Endothelial cell of umbilical vein (primary cell): ENCODE measurements at regions of chr4 and their contacts with region 1.

Region 1: GRCh38 chr4:183098723-183099536 is at the start of gene WWC2:
- DNase-seq: peak; percentile 94
- H3K4me3 ChIP-seq: peak within 1 kb of the TSS; percentile 80 to 90 (median 83)
- H3K27ac ChIP-seq: peak within 1 kb of the TSS; percentile 99
- H3K4me1 ChIP-seq: peaks cover 24% of the 10 kb centered on the region
- H3K27me3 ChIP-seq: no peaks in the 10 kb centered on the region
- CTCF ChIP-seq: no peak
- POLR2A ChIP-seq: peak; percentile 68
- total RNA-seq, gene WWC2: 51.8 and 52.2 TPM in 2 replicates

Region 2: GRCh38 chr4:183059797-183060196 is 39.1 kb before region 1 on chr4:
- CTCF ChIA-PET with region 1: no interaction called
- POLR2A ChIA-PET with region 1: no interaction called
- dilution Hi-C with region 1: no loop called
- intact Hi-C with region 1: no loop called
- DNase-seq: no peak
- H3K4me3 ChIP-seq: no peak overlapping the region
- H3K27ac ChIP-seq: no peak overlapping the region
- H3K4me1 ChIP-seq: no peaks in the 10 kb centered on the region
- H3K27me3 ChIP-seq: peaks cover 8 to 9% of the 10 kb centered on the region in 2 experiments
- CTCF ChIP-seq: no peak
- POLR2A ChIP-seq: no peak

Region 3: DNA sequence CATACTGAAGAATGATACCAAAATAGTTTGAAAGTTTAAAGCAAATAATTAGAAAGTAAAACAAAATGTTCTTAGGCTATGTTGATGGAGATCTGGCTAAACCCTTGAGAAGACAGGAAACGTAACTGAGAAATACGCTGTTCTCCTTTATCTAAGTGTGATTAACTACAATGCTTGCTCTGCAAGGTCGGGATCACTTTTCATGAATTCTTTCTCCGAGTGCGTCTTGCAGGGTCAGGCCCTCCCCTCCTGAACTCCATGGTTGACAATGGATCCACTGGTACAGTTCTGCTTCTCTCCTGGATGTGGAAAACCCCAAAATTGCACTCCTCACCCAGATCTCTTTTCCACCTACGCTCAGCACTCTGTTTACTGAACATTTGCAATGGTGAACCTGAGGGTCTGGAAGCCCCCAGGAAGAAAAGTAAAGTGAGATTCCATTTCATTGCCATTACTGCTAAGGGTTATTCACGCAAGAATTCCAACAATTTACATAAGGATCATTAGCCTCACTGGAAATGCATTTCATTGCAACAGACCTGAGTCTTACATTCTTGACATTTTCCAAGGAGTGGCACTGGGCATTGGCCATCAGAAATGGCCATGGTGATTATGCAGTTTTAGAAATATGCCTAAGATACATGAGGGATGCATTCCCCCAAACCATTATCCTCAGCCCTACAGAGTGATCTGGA is 24.5 kb before region 1 on chr4:
- CTCF ChIA-PET with region 1: interaction called, 32 read pairs
- POLR2A ChIA-PET with region 1: no interaction called
- dilution Hi-C with region 1: no loop called
- intact Hi-C with region 1: loop called (anchors 1 kb)
- DNase-seq: no peak
- H3K4me3 ChIP-seq: no peak overlapping the region
- H3K27ac ChIP-seq: no peak overlapping the region
- H3K4me1 ChIP-seq: peaks cover 4% of the 10 kb centered on the region
- H3K27me3 ChIP-seq: no peaks in the 10 kb centered on the region
- CTCF ChIP-seq: no peak
- POLR2A ChIP-seq: no peak

Region 4: GRCh38 chr4:183144787-183145186 is 45.9 kb after region 1 on chr4:
- CTCF ChIA-PET with region 1: interaction called, 6 read pairs
- POLR2A ChIA-PET with region 1: no interaction called
- dilution Hi-C with region 1: no loop called
- intact Hi-C with region 1: loop called (anchors 2 kb)
- DNase-seq: no peak
- H3K4me3 ChIP-seq: no peak overlapping the region
- H3K27ac ChIP-seq: no peak overlapping the region
- H3K4me1 ChIP-seq: peaks cover 10% of the 10 kb centered on the region
- H3K27me3 ChIP-seq: no peaks in the 10 kb centered on the region
- CTCF ChIP-seq: no peak
- POLR2A ChIP-seq: no peak

Region 5: GRCh38 chr4:183182873-183183725 is 84.2 kb after region 1 on chr4:
- CTCF ChIA-PET with region 1: interaction called, 6 read pairs
- POLR2A ChIA-PET with region 1: interaction called, 3 read pairs
- dilution Hi-C with region 1: no loop called
- intact Hi-C with region 1: loop called (anchors 1 kb)
- DNase-seq: peak; percentile 93
- H3K4me3 ChIP-seq: no peak overlapping the region
- H3K27ac ChIP-seq: peak overlapping the region; percentile 63
- H3K4me1 ChIP-seq: peaks cover 16% of the 10 kb centered on the region
- H3K27me3 ChIP-seq: no peaks in the 10 kb centered on the region
- CTCF ChIP-seq: no peak
- POLR2A ChIP-seq: no peak

Region 6: GRCh38 chr4:183249857-183250256 is 150.9 kb after region 1 on chr4:
- CTCF ChIA-PET with region 1: interaction called, 30 read pairs
- POLR2A ChIA-PET with region 1: no interaction called
- dilution Hi-C with region 1: loop called (anchors 10 kb)
- intact Hi-C with region 1: no loop called
- DNase-seq: peak; percentile 52
- H3K4me3 ChIP-seq: no peak overlapping the region
- H3K27ac ChIP-seq: no peak overlapping the region
- H3K4me1 ChIP-seq: no peaks in the 10 kb centered on the region
- H3K27me3 ChIP-seq: no peaks in the 10 kb centered on the region
- CTCF ChIP-seq: peak; percentile 11 to 33
- POLR2A ChIP-seq: no peak

Region 7: GRCh38 chr4:183261953-183262775 is 163.2 kb after region 1 on chr4:
- CTCF ChIA-PET with region 1: interaction called, 18 read pairs
- POLR2A ChIA-PET with region 1: no interaction called
- dilution Hi-C with region 1: loop called (anchors 10 kb)
- intact Hi-C with region 1: no loop called
- DNase-seq: peak; percentile 74
- H3K4me3 ChIP-seq: no peak overlapping the region
- H3K27ac ChIP-seq: peak overlapping the region; percentile 16
- H3K4me1 ChIP-seq: no peaks in the 10 kb centered on the region
- H3K27me3 ChIP-seq: no peaks in the 10 kb centered on the region
- CTCF ChIP-seq: peak; percentile 76 to 85
- POLR2A ChIP-seq: no peak

Region 8: DNA sequence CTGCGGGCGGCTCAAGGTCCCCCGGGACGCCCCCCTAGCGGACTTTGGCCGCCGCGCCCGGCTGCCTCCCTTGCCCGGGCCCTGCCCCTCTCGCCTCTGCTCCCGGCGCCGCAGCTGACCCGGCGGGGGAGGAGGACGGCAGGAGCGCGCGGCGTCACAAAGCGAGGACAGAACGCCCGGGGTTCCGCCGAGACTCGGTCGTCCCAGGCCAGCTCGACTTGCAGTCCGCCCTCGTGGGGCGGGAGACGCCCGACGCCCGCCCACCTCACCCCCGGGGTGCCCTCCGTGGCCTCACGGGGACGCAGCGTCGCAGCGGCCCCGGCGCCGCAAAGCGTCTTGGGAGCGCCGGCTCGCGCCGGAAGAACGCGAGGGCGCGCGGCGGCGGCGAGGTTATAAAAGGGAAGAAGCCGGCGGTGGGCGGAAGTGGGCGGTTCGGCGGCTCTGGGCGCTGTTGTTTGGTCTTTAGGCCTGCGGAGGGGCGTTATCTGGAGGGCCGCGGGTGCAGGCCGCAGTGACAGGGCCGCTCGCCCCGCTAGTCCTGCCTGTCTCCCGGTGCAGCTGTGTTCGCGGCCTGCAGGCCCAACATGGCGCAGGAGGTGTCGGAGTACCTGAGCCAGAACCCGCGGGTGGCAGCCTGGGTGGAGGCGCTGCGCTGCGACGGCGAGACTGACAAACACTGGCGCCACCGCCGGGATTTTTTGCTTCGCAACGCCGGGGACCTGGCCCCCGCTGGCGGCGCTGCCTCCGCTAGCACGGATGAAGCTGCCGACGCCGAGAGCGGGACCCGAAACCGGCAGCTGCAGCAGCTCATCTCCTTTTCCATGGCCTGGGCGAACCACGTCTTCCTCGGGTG is 345.5 kb after region 1 on chr4 and contains the start of gene CDKN2AIP:
- CTCF ChIA-PET with region 1: no interaction called
- POLR2A ChIA-PET with region 1: no interaction called
- dilution Hi-C with region 1: no loop called
- intact Hi-C with region 1: loop called (anchors 2 kb)
- DNase-seq: peak; percentile 93
- H3K4me3 ChIP-seq: peak within 1 kb of the TSS; percentile 34 to 68 (median 66)
- H3K27ac ChIP-seq: peak within 1 kb of the TSS; percentile 89
- H3K4me1 ChIP-seq: peaks cover 21% of the 10 kb centered on the region
- H3K27me3 ChIP-seq: no peaks in the 10 kb centered on the region
- CTCF ChIP-seq: no peak
- POLR2A ChIP-seq: peak; percentile 85
- total RNA-seq, gene CDKN2AIP: 10.4 and 12.8 TPM in 2 replicates